Activated CD8-positive, alpha-beta memory T cell treated with anti-CD3 and anti-CD28 coated beads, Interleukin-2, amount 10 ng/mL, durations not matched to agents 7 days and 5 days (primary cell): ENCODE measurements at regions of chr17 and their contacts with region 1.

Region 1: GRCh38 chr17:48113201-48113676 is 5.7 kb downstream of the SNX11 start:
- DNase-seq: peak; percentile 78
- ATAC-seq: peak; percentile 86
- H3K4me3 Mint-ChIP-seq: peak overlapping the region; percentile 49
- H3K27ac Mint-ChIP-seq: peak overlapping the region; percentile 95
- H3K4me1 Mint-ChIP-seq: peaks cover 45% of the 10 kb centered on the region
- H3K27me3 Mint-ChIP-seq: no peaks in the 10 kb centered on the region

Region 2: GRCh38 chr17:48101012-48101720 is 12.1 kb before region 1 on chr17 and contains the start of gene CBX1:
- CTCF ChIA-PET with region 1: interaction called, 28 read pairs
- DNase-seq: peak; percentile 97
- ATAC-seq: peak; percentile 97
- H3K4me3 Mint-ChIP-seq: peak within 1 kb of the TSS; percentile 91
- H3K27ac Mint-ChIP-seq: peak within 1 kb of the TSS; percentile 88
- H3K4me1 Mint-ChIP-seq: peaks cover 49% of the 10 kb centered on the region
- H3K27me3 Mint-ChIP-seq: no peaks in the 10 kb centered on the region
- total RNA-seq, gene CBX1: 46.3 to 47.8 TPM